B cell (primary cell): ENCODE measurements at regions of chr10 and their contacts with region 1.

Region 1: GRCh38 chr10:43648398-43649184 is at the start of gene ZNF32:
- DNase-seq: peak; percentile 89
- ATAC-seq: peak; percentile 99
- H3K4me3 ChIP-seq: peak within 1 kb of the TSS; percentile 22 to 82 (median 63)
- H3K4me3 Mint-ChIP-seq: peak within 1 kb of the TSS; percentile 98
- H3K27ac ChIP-seq: peak within 1 kb of the TSS in 1 of 2 donors; percentile 86
- H3K27ac Mint-ChIP-seq: peak within 1 kb of the TSS; percentile 89
- H3K4me1 ChIP-seq: peaks cover 7 to 13% of the 10 kb centered on the region in 2 donors
- H3K4me1 Mint-ChIP-seq: peaks cover 16% of the 10 kb centered on the region
- H3K27me3 ChIP-seq: peaks cover 0 to 6% (median 0%) of the 10 kb centered on the region in 4 experiments
- H3K27me3 Mint-ChIP-seq: peaks cover 10% of the 10 kb centered on the region
- CTCF ChIP-seq: no peak
- total RNA-seq, gene ZNF32: 29.6 and 35.8 TPM in 2 replicates

Region 2: GRCh38 chr10:42638055-42638820 is 1010.4 kb before region 1 on chr10 and contains the start of gene ZNF33B:
- CTCF ChIA-PET with region 1: no interaction called
- POLR2A ChIA-PET with region 1: no interaction called
- intact Hi-C with region 1: loop called (anchors 1 kb)
- DNase-seq: peak; percentile 95
- ATAC-seq: peak; percentile 94
- H3K4me3 ChIP-seq: peak within 1 kb of the TSS; percentile 86 to 97 (median 90)
- H3K4me3 Mint-ChIP-seq: peak within 1 kb of the TSS; percentile 99
- H3K27ac ChIP-seq: peak within 1 kb of the TSS; percentile 87 to 92
- H3K27ac Mint-ChIP-seq: peak within 1 kb of the TSS; percentile 99
- H3K4me1 ChIP-seq: peaks cover 14 to 15% of the 10 kb centered on the region in 2 donors
- H3K4me1 Mint-ChIP-seq: peaks cover 40% of the 10 kb centered on the region
- H3K27me3 ChIP-seq: no peaks in the 10 kb centered on the region
- H3K27me3 Mint-ChIP-seq: no peaks in the 10 kb centered on the region
- CTCF ChIP-seq: no peak
- total RNA-seq, gene ZNF33B: 66.6 and 66.9 TPM in 2 replicates

Region 3: GRCh38 chr10:43361986-43362839 is 286.4 kb before region 1 on chr10:
- CTCF ChIA-PET with region 1: no interaction called
- POLR2A ChIA-PET with region 1: no interaction called
- intact Hi-C with region 1: loop called (anchors 1 kb)
- DNase-seq: peak; percentile 95
- ATAC-seq: peak; percentile 97
- H3K4me3 ChIP-seq: peak overlapping the region; percentile 66 to 91 (median 74)
- H3K4me3 Mint-ChIP-seq: peak overlapping the region; percentile 97
- H3K27ac ChIP-seq: peak overlapping the region; percentile 78 to 86
- H3K27ac Mint-ChIP-seq: peak overlapping the region; percentile 94
- H3K4me1 ChIP-seq: peaks cover 8 to 19% of the 10 kb centered on the region in 2 donors
- H3K4me1 Mint-ChIP-seq: peaks cover 25% of the 10 kb centered on the region
- H3K27me3 ChIP-seq: no peaks in the 10 kb centered on the region
- H3K27me3 Mint-ChIP-seq: no peaks in the 10 kb centered on the region
- CTCF ChIP-seq: peak; percentile 36

Region 4: GRCh38 chr10:43574001-43574892 is 74.3 kb before region 1 on chr10 and contains the start of gene ZNF239:
- CTCF ChIA-PET with region 1: no interaction called
- POLR2A ChIA-PET with region 1: no interaction called
- intact Hi-C with region 1: loop called (anchors 1 kb)
- DNase-seq: peak; percentile 88
- ATAC-seq: peak; percentile 95
- H3K4me3 ChIP-seq: peak within 1 kb of the TSS; percentile 42 to 72 (median 60)
- H3K4me3 Mint-ChIP-seq: peak within 1 kb of the TSS; percentile 93
- H3K27ac ChIP-seq: peak within 1 kb of the TSS; percentile 40 to 67
- H3K27ac Mint-ChIP-seq: peak within 1 kb of the TSS; percentile 94
- H3K4me1 ChIP-seq: peaks cover 17 to 27% of the 10 kb centered on the region in 2 donors
- H3K4me1 Mint-ChIP-seq: peaks cover 43% of the 10 kb centered on the region
- H3K27me3 ChIP-seq: no peaks in the 10 kb centered on the region
- H3K27me3 Mint-ChIP-seq: no peaks in the 10 kb centered on the region
- CTCF ChIP-seq: no peak
- total RNA-seq, gene ZNF239: 5.9 and 7.6 TPM in 2 replicates

Region 5: GRCh38 chr10:43689955-43690771 is 41.6 kb after region 1 on chr10:
- CTCF ChIA-PET with region 1: no interaction called
- POLR2A ChIA-PET with region 1: no interaction called
- intact Hi-C with region 1: loop called (anchors 1 kb)
- DNase-seq: peak; percentile 75
- ATAC-seq: peak; percentile 95
- H3K4me3 ChIP-seq: peak overlapping the region; percentile 51 to 72 (median 60)
- H3K4me3 Mint-ChIP-seq: peak overlapping the region; percentile 87
- H3K27ac ChIP-seq: no peak overlapping the region
- H3K27ac Mint-ChIP-seq: peak overlapping the region; percentile 7
- H3K4me1 ChIP-seq: peaks cover 9 to 11% of the 10 kb centered on the region in 2 donors
- H3K4me1 Mint-ChIP-seq: peaks cover 17% of the 10 kb centered on the region
- H3K27me3 ChIP-seq: peaks cover 0 to 17% (median 2%) of the 10 kb centered on the region in 4 experiments
- H3K27me3 Mint-ChIP-seq: peaks cover 37% of the 10 kb centered on the region
- CTCF ChIP-seq: peak; percentile 71